GM10248 (cell line): ENCODE measurements at regions of chr2 and their contacts with region 1.

Region 1: DNA sequence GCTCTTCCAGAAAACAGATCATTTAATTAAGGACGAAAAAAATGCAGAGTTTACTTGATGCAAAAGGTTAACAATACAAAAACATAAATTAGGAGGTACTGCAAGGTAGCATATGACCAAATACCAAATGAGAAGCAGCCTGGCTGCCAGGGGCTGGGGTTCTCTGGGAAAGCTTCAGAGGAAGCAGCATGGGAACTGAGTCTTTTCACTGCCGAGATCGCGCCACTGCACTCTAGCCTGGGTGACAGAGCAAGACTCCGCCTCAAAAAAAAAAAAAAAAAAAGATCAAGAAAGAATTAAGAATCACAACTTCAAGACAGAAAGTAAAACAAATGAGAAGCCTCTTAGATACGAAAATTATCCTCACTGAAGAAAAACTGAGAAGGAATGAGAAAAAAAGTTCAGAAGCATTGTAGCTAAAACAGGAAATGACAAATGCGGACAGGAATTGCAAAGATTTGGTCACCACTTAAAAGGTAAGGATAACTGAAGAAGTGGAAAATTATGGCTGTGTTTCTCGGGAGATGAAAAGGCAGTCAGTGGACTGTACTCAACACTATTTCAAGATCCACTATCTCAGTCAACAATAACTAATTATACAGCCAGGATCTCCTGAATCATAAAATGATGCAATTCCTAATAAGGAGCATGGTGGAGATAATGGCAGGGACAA is 4.3 kb downstream of the SEPTIN10 start:
- DNase-seq: no peak
- CTCF ChIP-seq: no peak

Region 2: DNA sequence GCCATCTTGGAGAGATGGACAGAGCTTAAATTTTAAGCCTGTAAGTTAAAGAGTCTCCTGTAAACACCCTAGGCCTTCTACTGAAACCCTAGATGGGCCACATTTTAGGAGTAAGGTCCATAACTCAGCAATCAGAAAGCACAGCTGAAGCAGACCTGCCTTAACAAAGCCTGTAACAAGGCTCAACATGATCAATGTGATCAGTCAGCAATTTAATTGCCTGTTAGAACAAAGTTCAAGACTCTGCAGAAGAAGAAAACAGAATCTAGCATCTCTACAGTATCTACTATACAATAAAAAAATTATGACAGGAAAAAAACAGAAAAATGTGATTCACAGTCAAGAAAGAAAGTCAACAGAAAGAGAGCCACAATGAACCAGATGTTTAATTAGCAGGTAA is 22.8 kb before region 1 on chr2:
- CTCF ChIA-PET with region 1: interaction called, 11 read pairs
- POLR2A ChIA-PET with region 1: no interaction called
- DNase-seq: no peak
- CTCF ChIP-seq: no peak

Region 3: DNA sequence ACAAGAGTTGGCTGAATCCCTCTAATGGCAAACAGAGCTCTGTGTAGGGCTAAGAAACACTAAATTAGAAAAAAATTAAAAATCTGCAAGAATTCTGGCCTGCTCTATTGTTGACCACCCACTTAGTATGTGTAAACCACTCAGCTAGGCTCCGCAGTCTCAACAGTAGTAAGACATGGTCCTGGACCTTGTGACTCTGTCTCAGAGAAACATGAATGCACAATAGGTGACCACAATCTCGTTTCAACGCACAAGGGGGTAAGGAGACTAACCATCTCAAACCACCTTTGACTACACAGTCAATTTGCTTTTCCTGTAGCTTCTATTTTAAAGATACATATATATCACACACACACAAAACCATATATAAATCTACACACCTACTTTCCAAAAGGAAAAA is 12.2 kb before region 1 on chr2:
- CTCF ChIA-PET with region 1: interaction called, 13 read pairs
- POLR2A ChIA-PET with region 1: interaction called, 4 read pairs
- DNase-seq: no peak
- CTCF ChIP-seq: no peak